ENCODE measurements at regions of chr4 and their contacts with region 1.

Region 1: GRCh38 chr4:106201373-106201772 is 114.6 kb downstream of the TBCK start:
- DNase-seq: no peak
- ATAC-seq: no peak
- H3K4me3 ChIP-seq: no peak overlapping the region
- H3K27ac ChIP-seq: no peak overlapping the region
- H3K4me1 ChIP-seq: peaks cover 0 to 4% of the 10 kb centered on the region in 2 donors
- H3K27me3 ChIP-seq: no peaks in the 10 kb centered on the region

Region 2: GRCh38 chr4:105715692-105716278 is 485.6 kb before region 1 on chr4:
- intact Hi-C with region 1: loop called in 1 of 2 experiments (anchors 10 kb)
- DNase-seq: no peak
- ATAC-seq: no peak
- H3K4me3 ChIP-seq: no peak overlapping the region
- H3K27ac ChIP-seq: no peak overlapping the region
- H3K4me1 ChIP-seq: peaks cover 0 to 1% of the 10 kb centered on the region in 2 donors
- H3K27me3 ChIP-seq: no peaks in the 10 kb centered on the region

Measured in aorta (tissue), 5 donors.